ENCODE measurements at regions of chr17 and their contacts with region 1.

Region 1: GRCh38 chr17:39841134-39841683 is 22.9 kb downstream of the IKZF3 start:
- DNase-seq: no peak
- ATAC-seq: no peak

Region 2: GRCh38 chr17:39794249-39794970 is 46.8 kb before region 1 on chr17:
- intact Hi-C with region 1: loop called (anchors 5 kb)
- DNase-seq: no peak
- ATAC-seq: no peak

Region 3: DNA sequence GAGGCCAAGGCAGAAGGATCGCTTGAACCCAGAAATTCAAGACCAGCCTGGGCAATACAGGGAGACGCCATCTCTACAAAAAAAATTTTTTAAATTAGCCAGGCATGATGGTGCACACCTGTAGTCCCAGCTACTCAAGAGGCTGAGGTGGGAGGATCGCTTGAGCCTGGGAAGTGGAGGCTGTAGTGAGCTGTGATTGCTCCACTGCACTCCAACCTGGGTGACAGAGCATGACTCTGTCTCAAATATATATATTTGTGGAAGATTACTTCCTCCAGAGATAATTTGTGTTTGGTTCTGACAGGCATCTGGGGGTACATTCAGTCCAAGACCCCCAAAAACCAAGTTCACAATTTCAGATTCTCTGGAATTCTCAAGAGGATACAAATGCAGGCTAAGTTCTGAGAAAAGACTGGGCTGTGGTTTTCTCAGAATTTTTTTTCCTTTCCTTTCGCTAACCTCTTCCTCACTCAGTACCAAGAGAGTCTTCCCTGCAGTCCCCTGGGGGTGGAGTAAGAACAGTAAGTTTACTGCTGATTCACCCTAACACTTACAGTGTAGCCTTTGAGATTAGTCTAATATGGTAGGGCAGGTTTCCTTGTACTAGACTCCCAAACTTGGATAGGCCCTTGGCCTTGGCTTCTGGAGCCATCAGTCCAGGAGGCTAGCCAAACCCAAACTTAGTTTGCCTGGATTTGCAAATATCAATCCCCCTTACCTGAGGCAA is 62.1 kb after region 1 on chr17:
- intact Hi-C with region 1: no loop called
- DNase-seq: no peak
- ATAC-seq: no peak